ENCODE measurements at regions of chr22 and their contacts with region 1.

Region 1: GRCh38 chr22:37887610-37888378 is 18.3 kb upstream of the MICALL1 start:
- DNase-seq: no peak

Region 2: DNA sequence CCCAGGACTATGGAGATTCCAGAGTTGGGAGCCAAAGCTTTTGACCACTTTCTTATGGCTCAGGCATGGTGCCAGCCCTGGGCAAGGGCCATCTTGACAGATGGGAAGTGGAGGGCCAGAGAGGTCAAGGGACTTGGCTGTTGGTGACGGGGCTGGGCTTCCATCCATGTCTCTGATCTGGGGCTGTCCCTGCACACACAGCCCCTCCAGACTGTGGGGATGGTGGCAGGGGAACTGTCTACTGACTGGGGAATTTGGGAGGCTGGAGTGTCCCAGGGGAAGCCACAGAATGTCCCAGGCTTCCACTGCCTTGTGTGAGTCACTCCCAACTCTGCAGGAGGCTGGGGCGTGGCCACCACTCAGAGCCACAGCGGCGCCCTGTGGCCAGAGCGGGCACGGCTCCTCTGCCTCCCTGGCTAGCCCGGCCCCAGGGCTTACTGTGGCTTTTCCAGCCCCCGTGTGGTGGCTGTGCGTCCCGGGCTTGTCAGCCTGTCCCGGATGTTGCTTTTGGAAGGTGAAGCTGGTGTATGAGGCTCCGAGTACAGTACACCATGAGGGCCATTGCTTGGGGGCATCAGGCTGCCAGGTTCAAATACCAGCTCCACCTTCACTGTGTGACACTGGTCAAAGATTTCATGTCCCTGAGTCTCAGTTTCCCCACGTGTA is 46.0 kb after region 1 on chr22:
- intact Hi-C with region 1: loop called in 1 of 2 experiments (anchors 10 kb)
- DNase-seq: peak; percentile 97

Region 3: DNA sequence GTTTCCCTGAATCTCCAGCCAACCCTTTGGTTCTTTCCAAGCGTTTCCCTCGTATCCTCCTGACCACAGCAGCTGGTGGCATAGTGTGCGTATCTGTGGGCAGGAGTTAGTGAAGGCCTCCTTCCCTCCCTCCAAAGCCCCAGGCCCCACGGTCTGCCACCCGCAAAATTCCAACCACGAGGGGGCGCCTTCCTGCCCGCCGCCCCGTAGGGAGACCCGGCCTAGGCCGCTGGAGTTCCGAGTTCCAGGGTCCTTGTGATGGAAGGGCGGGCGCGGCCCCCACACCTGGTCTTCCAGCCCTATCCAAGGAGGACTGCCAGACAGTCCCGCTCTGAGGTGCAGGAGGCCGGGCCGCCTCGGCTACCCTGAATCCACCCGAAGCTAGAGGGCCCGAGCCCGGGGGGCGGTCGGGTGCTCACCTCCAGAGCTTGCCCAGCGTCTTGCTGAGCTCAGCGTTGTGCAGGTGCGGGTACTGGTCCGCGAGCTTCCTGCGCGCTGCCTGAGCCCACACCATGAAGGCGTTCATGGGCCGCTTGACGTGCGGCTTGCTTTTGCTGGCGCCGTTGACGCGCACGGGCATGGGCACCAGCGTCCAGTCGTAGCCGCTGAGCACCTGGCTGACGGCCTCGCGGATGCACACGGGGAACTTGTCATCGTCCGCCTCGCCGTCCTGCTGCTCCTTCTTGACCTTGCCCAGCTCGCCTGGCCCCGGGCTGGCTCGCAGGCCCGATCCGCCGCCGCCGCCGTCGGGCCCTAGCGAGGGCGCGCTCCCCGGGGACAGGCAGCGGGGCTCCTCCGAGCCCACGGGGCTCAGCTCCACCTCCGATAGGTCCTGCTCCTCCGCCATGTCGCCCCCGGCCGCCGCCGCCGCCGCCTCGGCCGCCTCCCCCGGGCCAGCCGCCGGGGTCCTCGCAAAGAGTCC is 95.4 kb after region 1 on chr22:
- intact Hi-C with region 1: no loop called
- DNase-seq: no peak

Measured in posterior vena cava (tissue), 2 donors.